ENCODE measurements at regions of chr4 and their contacts with region 1.

Region 1: DNA sequence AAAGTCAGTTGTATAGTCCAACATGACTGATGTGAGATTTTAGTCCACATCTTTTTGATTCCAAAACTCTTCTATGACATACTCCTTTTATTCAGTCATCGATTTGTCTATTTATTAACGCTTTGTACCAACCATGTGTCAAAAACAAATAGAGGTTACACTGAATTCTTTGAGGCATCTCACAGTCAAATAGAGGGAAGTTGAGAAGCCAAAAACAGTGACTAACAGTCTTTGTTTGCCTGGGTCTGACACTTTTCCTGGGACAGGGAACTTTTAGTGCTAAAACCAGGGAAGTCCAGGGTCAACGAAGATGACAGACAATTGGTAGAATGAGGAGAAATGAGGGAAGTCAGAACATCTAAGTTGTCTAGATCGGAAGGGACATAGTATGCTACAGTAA is 169.9 kb upstream of the HS3ST1 start:
- DNase-seq: no peak
- H3K4me3 ChIP-seq: no peak overlapping the region
- H3K27ac ChIP-seq: no peak overlapping the region
- H3K4me1 ChIP-seq: no peaks in the 10 kb centered on the region
- H3K27me3 ChIP-seq: no peaks in the 10 kb centered on the region
- CTCF ChIP-seq: no peak
- POLR2A ChIP-seq: no peak

Region 2: DNA sequence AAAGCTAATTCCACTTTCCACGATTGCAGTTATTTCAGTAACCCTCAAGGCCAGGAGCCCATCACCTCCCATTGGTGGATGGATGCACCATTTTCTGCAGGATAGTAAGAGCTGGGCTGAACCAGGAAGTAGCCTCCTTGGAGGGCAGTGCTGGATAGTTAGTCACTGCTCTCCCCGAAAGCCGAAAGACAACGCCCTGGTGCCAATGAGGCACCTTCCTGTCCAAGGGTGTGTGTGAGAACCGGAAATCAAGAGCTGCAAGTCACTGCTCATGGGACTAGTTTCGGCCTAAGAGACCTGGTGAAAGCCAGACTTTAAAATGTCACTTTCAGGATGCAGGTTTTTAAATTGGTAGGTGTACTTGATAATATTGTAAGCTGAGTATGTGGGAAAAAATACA is 33.9 kb after region 1 on chr4:
- intact Hi-C with region 1: loop called (anchors 1 kb)
- DNase-seq: no peak
- H3K4me3 ChIP-seq: no peak overlapping the region
- H3K27ac ChIP-seq: no peak overlapping the region
- H3K4me1 ChIP-seq: no peaks in the 10 kb centered on the region
- H3K27me3 ChIP-seq: no peaks in the 10 kb centered on the region
- CTCF ChIP-seq: no peak
- POLR2A ChIP-seq: no peak